Right ventricle myocardium superior (tissue), 1 donor: ENCODE measurements at regions of chr18 and their contacts with region 1.

Region 1: DNA sequence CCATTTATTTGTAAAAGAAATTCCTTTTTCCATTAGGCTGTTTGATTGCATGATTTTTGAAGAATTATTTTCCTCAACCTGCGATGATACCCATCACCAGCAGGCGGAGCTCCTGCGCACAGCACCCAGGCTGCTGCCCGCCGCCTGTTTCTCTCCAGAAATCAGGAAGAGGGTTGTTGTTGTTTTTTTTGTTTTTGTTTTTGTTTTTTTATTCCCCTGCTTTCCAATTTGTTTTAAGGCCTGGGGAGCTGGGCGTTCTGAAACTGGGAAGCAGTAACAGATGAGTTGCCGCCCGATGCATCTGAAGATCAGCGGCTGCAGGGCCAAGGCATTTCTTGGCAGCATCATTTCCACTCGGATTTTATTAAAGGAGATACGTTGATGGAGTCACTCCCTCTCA is 132.1 kb downstream of the MBP start:
- DNase-seq: peak; percentile 75
- ATAC-seq: peak; percentile 60

Region 2: GRCh38 chr18:76771192-76771799 is 229.2 kb before region 1 on chr18:
- intact Hi-C with region 1: no loop called
- DNase-seq: no peak
- ATAC-seq: no peak

Region 3: GRCh38 chr18:77054606-77055428 is 54.3 kb after region 1 on chr18:
- intact Hi-C with region 1: loop called (anchors 5 kb)
- DNase-seq: peak; percentile 93
- ATAC-seq: peak; percentile 81

Region 4: DNA sequence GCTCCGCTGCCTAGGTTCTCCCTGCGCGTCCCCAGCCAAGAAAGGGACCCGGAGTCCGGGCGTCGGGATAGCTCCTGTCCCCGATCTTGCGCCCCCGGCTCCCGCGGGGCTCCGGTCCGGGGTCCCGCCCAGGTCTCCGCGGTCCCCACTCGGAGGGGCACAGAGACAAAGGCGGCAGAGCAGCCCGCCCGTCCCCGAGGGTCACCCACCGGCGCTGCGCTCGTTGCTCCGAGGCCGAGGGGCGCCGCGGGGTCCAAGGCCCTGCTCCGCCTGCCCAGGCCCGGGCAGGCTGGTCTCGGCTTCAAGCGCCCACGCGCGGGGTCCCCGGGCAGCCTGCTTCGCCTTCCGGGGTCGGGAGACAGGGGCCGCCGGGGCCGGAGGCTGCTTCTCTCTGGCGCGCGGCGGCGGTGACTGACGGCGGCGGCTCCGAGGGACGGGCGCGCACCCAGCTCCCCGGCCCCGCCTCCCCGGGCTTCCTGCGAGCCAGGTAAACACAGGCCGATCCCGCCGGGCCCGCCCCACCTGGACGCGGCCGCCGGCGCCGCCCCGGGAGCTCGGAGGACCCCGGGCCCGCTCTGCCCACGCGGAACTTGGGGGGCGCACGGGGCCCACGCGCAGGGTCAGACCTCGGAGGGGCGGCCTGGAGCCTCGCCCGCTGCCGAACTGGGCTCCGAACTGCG is 132.0 kb after region 1 on chr18 and contains the start of gene MBP:
- intact Hi-C with region 1: loop called (anchors 5 kb)
- DNase-seq: peak; percentile 84
- ATAC-seq: peak; percentile 78
- total RNA-seq, gene MBP: 29.9 TPM

Region 5: DNA sequence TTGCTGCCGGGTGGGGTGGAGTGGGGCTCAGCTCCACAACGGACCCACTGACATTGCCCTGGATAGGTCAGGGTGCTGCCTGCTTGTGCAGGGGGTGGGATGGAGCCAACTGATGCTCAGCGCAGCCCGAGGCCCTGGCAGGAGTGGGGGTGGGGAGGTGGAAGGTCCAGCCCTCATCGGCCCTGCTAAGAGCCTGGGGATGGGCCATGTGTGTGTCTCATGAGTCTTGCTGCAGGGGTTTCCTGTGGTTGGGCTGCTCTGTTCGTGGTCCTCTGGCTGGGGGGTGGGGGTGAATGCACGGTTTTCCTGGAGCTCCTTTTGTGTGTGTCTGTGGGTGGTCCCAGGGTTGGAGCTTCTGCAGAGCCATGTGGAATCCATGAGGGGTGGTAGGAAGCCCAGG is 209.7 kb after region 1 on chr18:
- intact Hi-C with region 1: loop called (anchors 5 kb)
- DNase-seq: no peak
- ATAC-seq: no peak